GM12878 (cell line): ENCODE measurements at regions of chr13 and their contacts with region 1.

Region 1: GRCh38 chr13:30792285-30793000 is 57.1 kb downstream of the ALOX5AP start:
- DNase-seq: no peak
- ATAC-seq: no peak
- H3K4me3 ChIP-seq: no peak overlapping the region
- H3K27ac ChIP-seq: no peak overlapping the region
- H3K4me1 ChIP-seq: peaks cover 11% of the 10 kb centered on the region
- H3K27me3 ChIP-seq: no peaks in the 10 kb centered on the region
- CTCF ChIP-seq: no peak
- EP300 ChIP-seq: no peak
- POLR2A ChIP-seq: no peak
- RAD21 ChIP-seq: no peak

Region 2: GRCh38 chr13:30572859-30573275 is 219.6 kb before region 1 on chr13:
- CTCF ChIA-PET with region 1: no interaction called
- POLR2A ChIA-PET with region 1: interaction called, 10 read pairs
- RAD21 ChIA-PET with region 1: no interaction called
- SMC1A ChIA-PET with region 1: interaction called, 4 read pairs
- in situ Hi-C with region 1: no loop called
- intact Hi-C with region 1: no loop called
- DNase-seq: peak; percentile 28
- ATAC-seq: peak; percentile 81
- H3K4me3 ChIP-seq: no peak overlapping the region; the same call in 1 of the 2 replicates
- H3K27ac ChIP-seq: no peak overlapping the region
- H3K4me1 ChIP-seq: peaks cover 17% of the 10 kb centered on the region; the same call in 1 of the 2 replicates
- H3K27me3 ChIP-seq: peaks cover 0 to under 1% of the 10 kb centered on the region in 2 experiments; a peak in 1 of 4 replicates
- CTCF ChIP-seq: peak; percentile 5 to 35 (median 31); a peak in 3 of 6 replicates
- EP300 ChIP-seq: no peak
- POLR2A ChIP-seq: no peak
- RAD21 ChIP-seq: peak; percentile 68

Region 3: DNA sequence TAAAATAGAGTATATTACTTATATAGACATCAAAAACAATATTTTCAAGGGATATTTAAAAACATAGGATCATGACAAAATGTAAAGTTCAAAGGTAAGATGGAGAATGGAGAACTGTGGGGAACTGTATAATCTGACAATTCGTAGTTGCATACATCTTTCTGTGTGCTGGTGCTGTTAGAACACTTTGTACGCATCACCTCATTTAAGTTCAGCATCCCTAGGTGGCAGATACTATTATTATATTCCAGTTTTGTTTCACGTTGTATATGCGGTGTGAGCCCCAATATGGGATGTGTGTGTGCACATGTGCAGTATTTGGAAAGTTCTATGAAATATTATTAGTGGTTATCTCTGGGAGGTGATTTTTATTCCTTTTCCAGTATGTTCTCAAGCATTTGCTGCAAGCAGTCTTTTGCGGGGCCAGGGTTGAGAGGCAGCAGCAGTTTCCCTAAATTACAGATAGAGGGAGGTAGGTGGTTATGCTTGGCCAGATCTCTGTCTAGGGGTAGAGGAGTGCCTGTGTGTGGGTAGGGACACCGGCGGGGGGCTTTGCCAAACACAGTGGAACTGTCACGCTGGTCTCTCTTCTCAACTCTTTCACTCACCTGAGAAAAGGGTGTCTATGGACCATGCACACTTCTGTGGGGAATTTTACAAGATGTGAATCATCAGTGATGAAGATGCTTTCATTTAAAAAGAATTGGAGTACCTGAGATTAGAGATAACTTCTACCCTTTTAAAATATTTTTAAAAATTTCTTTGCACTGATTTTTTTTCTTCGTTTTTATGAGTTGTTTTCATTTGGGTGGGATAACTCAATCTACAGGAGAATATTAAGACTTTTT is 112.7 kb before region 1 on chr13:
- CTCF ChIA-PET with region 1: interaction called, 9 read pairs
- POLR2A ChIA-PET with region 1: no interaction called
- RAD21 ChIA-PET with region 1: interaction called, 10 read pairs
- SMC1A ChIA-PET with region 1: interaction called, 6 read pairs
- in situ Hi-C with region 1: loop called (anchors 5 kb)
- intact Hi-C with region 1: no loop called
- DNase-seq: no peak
- ATAC-seq: peak; percentile 96
- H3K4me3 ChIP-seq: no peak overlapping the region
- H3K27ac ChIP-seq: no peak overlapping the region
- H3K4me1 ChIP-seq: no peaks in the 10 kb centered on the region
- H3K27me3 ChIP-seq: 0 out of 4 replicates have a peak, but pooled peaks cover 0 to 2% of the 10 kb centered on the region in 2 experiments
- CTCF ChIP-seq: peak; percentile 63 to 73 (median 71)
- EP300 ChIP-seq: no peak
- POLR2A ChIP-seq: no peak
- RAD21 ChIP-seq: peak; percentile 86

Region 4: DNA sequence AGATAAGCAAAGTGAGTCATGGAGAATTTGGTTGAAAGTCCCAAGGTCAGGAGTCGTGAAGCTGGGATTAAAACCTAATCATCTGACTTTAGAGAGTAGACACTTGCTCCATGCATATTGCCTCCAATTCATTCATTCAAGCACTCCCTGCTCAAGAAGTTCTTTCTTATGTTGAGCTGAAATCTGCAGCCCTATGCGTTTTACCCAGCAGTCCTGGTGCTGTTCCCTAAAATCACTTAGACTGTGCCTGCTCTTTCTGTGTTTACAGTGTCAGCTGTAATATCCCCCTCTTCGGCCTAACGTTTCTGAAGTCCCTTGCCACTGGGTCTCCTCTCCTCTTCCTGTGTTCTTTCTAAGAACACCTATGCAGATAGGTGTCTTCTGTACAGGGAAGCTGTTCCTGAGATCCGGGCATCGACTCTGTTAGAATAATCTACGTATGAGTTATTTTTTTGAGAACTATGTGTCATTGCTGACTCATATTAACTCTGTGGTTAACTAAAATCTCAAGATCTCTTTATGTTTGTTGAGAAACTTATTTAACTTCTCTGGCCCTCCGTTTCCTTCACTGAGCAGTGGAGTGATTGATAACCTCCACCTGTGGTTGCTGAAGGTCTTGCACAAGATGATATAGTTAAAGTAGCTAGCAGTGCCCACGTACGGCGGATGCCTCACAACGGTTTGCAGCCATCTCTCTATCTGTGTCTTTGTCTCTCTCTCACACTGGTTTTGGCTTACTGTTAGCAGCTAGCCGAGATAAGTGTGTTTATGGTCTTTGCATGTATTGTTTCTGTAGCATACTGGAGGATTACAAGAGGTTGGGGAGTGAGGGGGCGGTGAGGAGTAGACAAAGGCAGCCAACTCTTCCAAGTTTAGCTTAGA is 52.4 kb before region 1 on chr13:
- CTCF ChIA-PET with region 1: interaction called, 6 read pairs
- POLR2A ChIA-PET with region 1: interaction called, 14 read pairs
- RAD21 ChIA-PET with region 1: interaction called, 66 read pairs
- SMC1A ChIA-PET with region 1: interaction called, 51 read pairs
- in situ Hi-C with region 1: no loop called
- intact Hi-C with region 1: loop called (anchors 2 kb)
- DNase-seq: peak; percentile 76
- ATAC-seq: peak; percentile 54
- H3K4me3 ChIP-seq: peak overlapping the region; percentile 42
- H3K27ac ChIP-seq: no peak overlapping the region
- H3K4me1 ChIP-seq: peaks cover 60% of the 10 kb centered on the region
- H3K27me3 ChIP-seq: no peaks in the 10 kb centered on the region
- CTCF ChIP-seq: no peak
- EP300 ChIP-seq: peak in 1 of 2 experiments; percentile 39; a peak in 2 of 4 replicates
- POLR2A ChIP-seq: no peak
- RAD21 ChIP-seq: peak; percentile 32; the same call in 1 of the 2 replicates

Region 5: DNA sequence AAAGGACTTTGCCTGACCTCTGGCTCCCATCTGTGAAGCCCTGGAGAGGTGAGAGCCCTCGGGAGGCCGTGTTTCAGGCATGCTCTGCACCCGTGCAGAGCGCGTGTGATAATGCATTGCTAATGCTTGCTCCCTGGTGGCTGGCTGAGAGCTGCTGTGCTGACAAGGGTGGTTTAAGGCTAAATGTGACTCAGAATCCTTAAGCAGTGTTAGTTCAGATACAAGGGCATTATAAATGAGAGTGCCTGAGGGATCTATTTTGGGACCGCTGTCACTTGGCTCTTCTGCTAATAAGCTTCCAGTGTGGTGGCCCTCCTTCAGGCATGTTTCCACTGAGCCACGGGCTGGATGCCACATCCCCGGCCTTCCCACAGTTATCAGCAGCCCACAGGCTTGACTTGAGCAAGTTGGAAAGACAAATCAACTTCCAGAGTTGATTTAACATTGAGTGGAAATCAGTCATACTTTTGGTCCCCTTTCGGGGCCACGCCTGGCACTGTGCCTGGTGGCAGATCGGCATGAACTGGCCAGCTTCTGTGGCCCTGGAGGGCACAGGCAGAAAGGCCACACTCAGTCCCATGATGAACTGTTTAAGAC is 40.1 kb before region 1 on chr13:
- CTCF ChIA-PET with region 1: no interaction called
- POLR2A ChIA-PET with region 1: no interaction called
- RAD21 ChIA-PET with region 1: interaction called, 6 read pairs
- SMC1A ChIA-PET with region 1: interaction called, 19 read pairs
- in situ Hi-C with region 1: no loop called
- intact Hi-C with region 1: no loop called
- DNase-seq: no peak
- ATAC-seq: no peak
- H3K4me3 ChIP-seq: no peak overlapping the region
- H3K27ac ChIP-seq: no peak overlapping the region
- H3K4me1 ChIP-seq: no peaks in the 10 kb centered on the region
- H3K27me3 ChIP-seq: no peaks in the 10 kb centered on the region
- CTCF ChIP-seq: no peak
- EP300 ChIP-seq: no peak
- POLR2A ChIP-seq: no peak
- RAD21 ChIP-seq: no peak